K562 (cell line): ENCODE measurements at regions of chr1 and their contacts with region 1.

Region 1: DNA sequence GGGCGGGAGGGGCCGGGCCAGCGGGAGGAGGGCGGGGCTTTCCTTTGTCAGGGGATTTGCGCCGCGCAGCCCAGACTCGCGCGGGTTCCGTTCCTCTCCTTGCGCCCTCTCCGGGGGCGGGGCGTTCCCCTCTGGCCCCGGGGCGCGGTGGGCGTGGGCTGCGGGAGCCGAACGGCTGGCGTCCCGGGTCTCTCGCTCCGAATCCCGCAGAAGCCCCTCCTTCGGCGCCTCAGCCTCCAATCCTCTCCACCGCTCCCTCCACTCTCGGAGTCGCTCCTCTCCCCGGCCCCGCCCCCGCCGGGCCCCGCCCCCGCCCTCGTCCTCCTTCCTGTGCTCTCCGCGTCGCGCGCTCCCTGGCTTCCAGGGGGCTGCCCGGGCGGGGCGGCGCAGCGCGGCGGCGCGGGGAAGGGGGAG is 82.8 kb upstream of the BMP8A start:
- DNase-seq: peak; percentile 97 to 99 (median 98)
- ATAC-seq: peak; percentile 91
- H3K4me3 ChIP-seq: peak overlapping the region; percentile 81
- H3K27ac ChIP-seq: peak overlapping the region; percentile 73
- H3K4me1 ChIP-seq: peaks cover 21 to 36% of the 10 kb centered on the region in 2 experiments; a peak in 4 of 5 replicates
- H3K27me3 ChIP-seq: no peaks in the 10 kb centered on the region
- CTCF ChIP-seq: no peak
- EP300 ChIP-seq: no peak
- POLR2A ChIP-seq: no peak
- RAD21 ChIP-seq: no peak

Region 2: DNA sequence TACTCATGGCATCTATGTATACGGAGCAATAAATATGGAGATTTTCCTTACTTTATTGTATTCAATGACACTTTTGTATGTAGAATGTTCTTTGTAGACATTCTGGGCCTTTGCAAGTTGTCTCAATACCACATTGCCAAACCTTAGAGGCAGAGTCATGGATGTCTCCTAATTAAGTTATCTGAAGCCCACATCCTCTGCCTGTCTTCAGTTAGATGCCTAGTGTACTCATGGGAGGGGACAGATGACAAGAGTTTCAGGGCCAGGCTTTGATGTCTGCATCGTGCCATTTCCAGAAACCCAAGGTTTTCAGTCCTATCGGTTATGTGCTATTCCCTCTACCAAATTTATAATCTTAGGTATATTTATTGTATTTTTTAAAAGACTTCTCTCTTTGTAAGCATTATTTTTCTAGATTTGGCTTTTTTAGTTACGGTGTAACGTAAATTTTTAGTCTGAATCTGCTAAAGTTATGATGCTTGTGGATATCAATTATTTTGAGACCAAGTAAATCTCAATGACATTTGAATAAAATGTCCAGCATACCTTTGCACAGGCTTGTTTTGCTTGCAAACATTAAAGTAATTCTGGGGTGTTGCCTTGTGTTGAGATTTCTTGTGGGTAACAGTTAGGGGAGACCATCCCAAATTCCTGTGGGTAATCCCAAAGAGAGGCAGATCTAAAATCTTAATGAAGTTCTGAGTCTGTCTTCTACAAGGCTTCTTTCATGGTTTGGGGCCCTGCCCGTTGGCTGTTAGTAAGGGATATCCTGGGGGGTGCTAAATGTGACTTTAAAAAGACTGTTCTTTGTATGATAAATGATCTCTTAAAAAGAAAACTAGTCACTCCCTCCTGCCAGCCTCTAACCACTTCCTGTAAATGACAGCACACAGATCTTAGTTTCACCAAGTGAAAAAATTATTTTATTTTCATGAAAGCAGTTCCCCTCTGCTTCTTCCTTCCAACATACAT is 212.1 kb before region 1 on chr1:
- CTCF ChIA-PET with region 1: no interaction called
- POLR2A ChIA-PET with region 1: no interaction called
- in situ Hi-C with region 1: no loop called
- intact Hi-C with region 1: loop called (anchors 10 kb)
- DNase-seq: peak; percentile 41 to 84 (median 62)
- ATAC-seq: peak; percentile 75
- H3K4me3 ChIP-seq: no peak overlapping the region
- H3K27ac ChIP-seq: peak overlapping the region; percentile 72
- H3K4me1 ChIP-seq: peaks cover 22 to 40% of the 10 kb centered on the region in 2 experiments
- H3K27me3 ChIP-seq: no peaks in the 10 kb centered on the region
- CTCF ChIP-seq: no peak
- EP300 ChIP-seq: peak; percentile 81; the same call in 1 of the 2 replicates
- POLR2A ChIP-seq: no peak
- RAD21 ChIP-seq: 0 out of 4 replicates have a peak, but pooled peaks have one; percentile 6 to 28

Region 3: DNA sequence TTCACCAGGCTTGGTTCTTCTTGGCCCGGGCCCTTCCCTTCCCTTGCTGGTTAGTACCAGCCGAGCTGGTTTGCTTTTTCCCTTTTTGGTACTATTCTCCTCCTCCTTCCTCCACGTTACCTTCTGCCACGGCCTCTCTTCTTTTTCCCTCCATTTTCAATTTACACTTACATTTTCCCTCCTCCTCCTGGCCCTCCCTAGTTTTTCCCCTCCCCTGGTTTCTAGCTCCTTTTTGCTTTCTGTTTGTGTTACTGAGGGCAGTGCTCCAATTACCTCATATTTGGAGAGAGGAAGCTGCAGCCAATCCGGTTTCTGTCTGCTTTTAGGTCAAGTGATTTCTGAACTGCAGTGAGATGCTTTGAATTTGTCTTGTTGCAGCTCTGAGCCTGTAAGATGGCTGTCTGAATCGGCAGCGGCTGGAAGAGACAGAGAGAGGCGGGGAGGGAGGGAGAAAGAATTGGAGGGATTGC is 140.5 kb before region 1 on chr1:
- CTCF ChIA-PET with region 1: interaction called, 10 read pairs
- POLR2A ChIA-PET with region 1: interaction called, 5 read pairs
- in situ Hi-C with region 1: no loop called
- intact Hi-C with region 1: loop called (anchors 2 kb)
- DNase-seq: no peak
- ATAC-seq: no peak
- H3K4me3 ChIP-seq: no peak overlapping the region
- H3K27ac ChIP-seq: no peak overlapping the region
- H3K4me1 ChIP-seq: peaks cover 15 to 34% of the 10 kb centered on the region in 2 experiments
- H3K27me3 ChIP-seq: no peaks in the 10 kb centered on the region
- CTCF ChIP-seq: no peak
- EP300 ChIP-seq: no peak
- POLR2A ChIP-seq: no peak
- RAD21 ChIP-seq: no peak

Region 4: GRCh38 chr1:39378377-39378776 is 30.3 kb before region 1 on chr1:
- CTCF ChIA-PET with region 1: interaction called, 3 read pairs
- POLR2A ChIA-PET with region 1: interaction called, 3 read pairs
- in situ Hi-C with region 1: no loop called
- intact Hi-C with region 1: loop called (anchors 5 kb)
- DNase-seq: peak in 2 of 4 experiments; percentile 29 to 34
- ATAC-seq: peak; percentile 81
- H3K4me3 ChIP-seq: no peak overlapping the region
- H3K27ac ChIP-seq: no peak overlapping the region
- H3K4me1 ChIP-seq: no peaks in the 10 kb centered on the region
- H3K27me3 ChIP-seq: no peaks in the 10 kb centered on the region
- CTCF ChIP-seq: peak; percentile 35 to 57 (median 53); a peak in 5 of 6 replicates
- EP300 ChIP-seq: no peak
- POLR2A ChIP-seq: no peak
- RAD21 ChIP-seq: peak in 1 of 2 experiments; percentile 59; a peak in 2 of 4 replicates

Region 5: GRCh38 chr1:39391691-39392679 is 16.7 kb before region 1 on chr1:
- CTCF ChIA-PET with region 1: no interaction called
- POLR2A ChIA-PET with region 1: interaction called, 42 read pairs
- in situ Hi-C with region 1: no loop called
- intact Hi-C with region 1: loop called (anchors 2 kb)
- DNase-seq: peak in 3 of 4 experiments; percentile 27 to 82 (median 78)
- ATAC-seq: peak; percentile 81
- H3K4me3 ChIP-seq: no peak overlapping the region
- H3K27ac ChIP-seq: peak overlapping the region; percentile 81
- H3K4me1 ChIP-seq: peaks cover 32 to 78% of the 10 kb centered on the region in 2 experiments
- H3K27me3 ChIP-seq: no peaks in the 10 kb centered on the region
- CTCF ChIP-seq: no peak
- EP300 ChIP-seq: peak; percentile 37
- POLR2A ChIP-seq: peak; percentile 41
- RAD21 ChIP-seq: no peak; a peak in 1 of 4 replicates

Region 6: GRCh38 chr1:39398278-39399021 is 10.2 kb before region 1 on chr1:
- CTCF ChIA-PET with region 1: no interaction called
- POLR2A ChIA-PET with region 1: interaction called, 42 read pairs
- in situ Hi-C with region 1: no loop called
- intact Hi-C with region 1: loop called (anchors 2 kb)
- DNase-seq: peak; percentile 70 to 85 (median 76)
- ATAC-seq: peak; percentile 90
- H3K4me3 ChIP-seq: no peak overlapping the region
- H3K27ac ChIP-seq: peak overlapping the region; percentile 70; the same call in 2 of the 3 replicates
- H3K4me1 ChIP-seq: peaks cover 19 to 54% of the 10 kb centered on the region in 2 experiments
- H3K27me3 ChIP-seq: no peaks in the 10 kb centered on the region
- CTCF ChIP-seq: peak in 1 of 3 experiments; percentile 15; a peak in 1 of 6 replicates
- EP300 ChIP-seq: peak; percentile 84
- POLR2A ChIP-seq: no peak
- RAD21 ChIP-seq: no peak; a peak in 2 of 4 replicates

Region 7: GRCh38 chr1:39422614-39423013 is 14.0 kb after region 1 on chr1:
- CTCF ChIA-PET with region 1: no interaction called
- POLR2A ChIA-PET with region 1: interaction called, 36 read pairs
- in situ Hi-C with region 1: no loop called
- intact Hi-C with region 1: no loop called
- DNase-seq: peak in 2 of 4 experiments; percentile 61 to 65
- ATAC-seq: 0 out of 3 replicates have a peak, but pooled peaks have one; percentile 36
- H3K4me3 ChIP-seq: no peak overlapping the region
- H3K27ac ChIP-seq: no peak overlapping the region
- H3K4me1 ChIP-seq: no peaks in the 10 kb centered on the region
- H3K27me3 ChIP-seq: no peaks in the 10 kb centered on the region
- CTCF ChIP-seq: no peak
- EP300 ChIP-seq: no peak
- POLR2A ChIP-seq: no peak
- RAD21 ChIP-seq: no peak